ENCODE measurements at regions of chr12 and their contacts with region 1.

Region 1: GRCh38 chr12:66693901-66694675 is 15.2 kb upstream of the GRIP1 start:
- DNase-seq: no peak
- H3K4me3 Mint-ChIP-seq: no peak overlapping the region
- H3K27ac Mint-ChIP-seq: no peak overlapping the region
- H3K4me1 Mint-ChIP-seq: no peaks in the 10 kb centered on the region
- H3K27me3 Mint-ChIP-seq: peaks cover 10% of the 10 kb centered on the region

Region 2: GRCh38 chr12:66269757-66270383 is 424.2 kb before region 1 on chr12:
- intact Hi-C with region 1: loop called (anchors 5 kb)
- DNase-seq: no peak
- H3K4me3 Mint-ChIP-seq: no peak overlapping the region
- H3K27ac Mint-ChIP-seq: no peak overlapping the region
- H3K4me1 Mint-ChIP-seq: peaks cover 6% of the 10 kb centered on the region
- H3K27me3 Mint-ChIP-seq: peaks cover 2% of the 10 kb centered on the region

Measured in activated T-helper 2 cell treated with anti-CD3 and anti-CD28 coated beads, Interferon-gamma antibody, Interleukin-2, Interleukin-4, amounts not matched to agents 10 μg/mL and 5 μg/mL and 100 μg/mL, durations not matched to agents 14 hours and 24 hours and 36 hours (primary cell).